CD8-positive, alpha-beta T cell (primary cell): ENCODE measurements at regions of chr10 and their contacts with region 1.

Region 1: DNA sequence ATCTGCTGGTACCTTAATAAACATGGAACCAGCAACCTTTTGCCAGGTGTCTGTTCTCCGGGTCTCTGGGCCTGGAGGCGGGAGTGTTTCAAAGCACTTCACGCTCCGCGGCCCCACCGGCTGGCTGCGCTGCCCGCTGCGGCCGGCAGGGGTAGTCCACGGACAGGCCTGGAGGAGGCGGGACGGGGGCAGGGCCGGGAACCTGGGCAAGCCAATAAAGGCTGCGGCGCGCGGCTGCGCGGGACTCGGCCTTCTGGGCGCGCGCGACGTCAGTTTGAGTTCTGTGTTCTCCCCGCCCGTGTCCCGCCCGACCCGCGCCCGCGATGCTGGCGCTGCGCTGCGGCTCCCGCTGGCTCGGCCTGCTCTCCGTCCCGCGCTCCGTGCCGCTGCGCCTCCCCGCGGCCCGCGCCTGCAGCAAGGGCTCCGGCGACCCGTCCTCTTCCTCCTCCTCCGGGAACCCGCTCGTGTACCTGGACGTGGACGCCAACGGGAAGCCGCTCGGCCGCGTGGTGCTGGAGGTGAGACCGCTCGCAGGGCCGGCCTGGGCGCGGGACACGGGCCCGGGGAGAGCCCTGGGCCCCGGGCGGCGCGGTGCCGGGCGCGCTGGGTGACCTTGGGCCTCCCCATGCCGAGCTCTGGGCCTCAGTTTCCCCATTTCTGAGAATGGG is at the start of gene PPIF:
- DNase-seq: peak; percentile 76 to 97 (median 92)
- ATAC-seq: peak; percentile 90
- H3K4me3 ChIP-seq: peak within 1 kb of the TSS; percentile 76 to 93
- H3K4me3 Mint-ChIP-seq: peak within 1 kb of the TSS; percentile 78
- H3K27ac ChIP-seq: peak within 1 kb of the TSS; percentile 60 to 74
- H3K27ac Mint-ChIP-seq: peak within 1 kb of the TSS; percentile 87
- H3K4me1 ChIP-seq: peaks cover 27% of the 10 kb centered on the region
- H3K4me1 Mint-ChIP-seq: peaks cover 22% of the 10 kb centered on the region
- H3K27me3 ChIP-seq: no peaks in the 10 kb centered on the region
- H3K27me3 Mint-ChIP-seq: no peaks in the 10 kb centered on the region
- CTCF ChIP-seq: peak; percentile 86
- total RNA-seq, gene PPIF: 33.7 to 36.4 TPM

Region 2: GRCh38 chr10:78312197-78313047 is 1034.9 kb before region 1 on chr10:
- CTCF ChIA-PET with region 1: no interaction called
- POLR2A ChIA-PET with region 1: no interaction called
- intact Hi-C with region 1: loop called in 1 of 2 experiments (anchors 5 kb)
- DNase-seq: peak in 1 of 9 experiments; percentile 15
- ATAC-seq: no peak
- H3K4me3 ChIP-seq: no peak overlapping the region
- H3K4me3 Mint-ChIP-seq: no peak overlapping the region
- H3K27ac ChIP-seq: no peak overlapping the region
- H3K27ac Mint-ChIP-seq: no peak overlapping the region
- H3K4me1 ChIP-seq: no peaks in the 10 kb centered on the region
- H3K4me1 Mint-ChIP-seq: no peaks in the 10 kb centered on the region
- H3K27me3 ChIP-seq: no peaks in the 10 kb centered on the region
- H3K27me3 Mint-ChIP-seq: no peaks in the 10 kb centered on the region
- CTCF ChIP-seq: no peak

Region 3: DNA sequence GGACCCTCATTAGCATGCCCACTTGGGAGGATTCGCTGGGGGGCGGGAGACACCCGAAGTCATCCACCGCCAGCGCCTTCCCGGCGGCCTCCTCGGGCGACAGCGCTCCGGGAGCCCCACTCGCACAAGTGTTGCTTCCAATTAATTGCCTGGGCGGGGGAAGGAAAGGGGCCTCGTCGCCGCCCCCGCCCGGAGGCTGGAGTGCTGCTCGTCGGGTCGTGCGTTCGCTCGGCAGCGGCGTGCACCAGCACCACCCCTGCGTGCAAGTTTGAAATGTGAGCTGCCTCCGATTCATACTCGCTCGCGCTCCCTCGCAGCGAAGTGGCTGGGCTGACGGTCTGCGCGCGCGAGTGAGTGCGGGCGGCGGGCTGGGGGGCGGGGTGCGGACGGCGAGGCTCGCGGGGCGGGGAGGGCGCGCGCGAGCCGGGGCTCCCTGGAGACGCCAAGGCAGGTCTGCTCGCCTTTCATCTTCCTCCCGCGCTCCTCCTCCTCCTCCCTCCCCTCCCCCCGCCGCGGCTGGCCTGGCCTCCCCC is 104.7 kb before region 1 on chr10:
- CTCF ChIA-PET with region 1: no interaction called
- POLR2A ChIA-PET with region 1: no interaction called
- intact Hi-C with region 1: loop called (anchors 5 kb)
- DNase-seq: peak in 8 of 9 experiments; percentile 13 to 80 (median 51)
- ATAC-seq: peak; percentile 51
- H3K4me3 ChIP-seq: peak overlapping the region; percentile 49 to 61
- H3K4me3 Mint-ChIP-seq: peak overlapping the region; percentile 76
- H3K27ac ChIP-seq: peak overlapping the region in 1 of 2 experiments; percentile 39
- H3K27ac Mint-ChIP-seq: no peak overlapping the region
- H3K4me1 ChIP-seq: peaks cover 33% of the 10 kb centered on the region
- H3K4me1 Mint-ChIP-seq: peaks cover 42% of the 10 kb centered on the region
- H3K27me3 ChIP-seq: no peaks in the 10 kb centered on the region
- H3K27me3 Mint-ChIP-seq: no peaks in the 10 kb centered on the region
- CTCF ChIP-seq: no peak

Region 4: GRCh38 chr10:79292891-79293746 is 54.2 kb before region 1 on chr10:
- CTCF ChIA-PET with region 1: interaction called, 6 read pairs
- POLR2A ChIA-PET with region 1: no interaction called
- intact Hi-C with region 1: loop called in 1 of 2 experiments (anchors 2 kb)
- DNase-seq: peak in 5 of 9 experiments; percentile 26 to 60 (median 47)
- ATAC-seq: peak; percentile 68
- H3K4me3 ChIP-seq: no peak overlapping the region
- H3K4me3 Mint-ChIP-seq: no peak overlapping the region
- H3K27ac ChIP-seq: no peak overlapping the region
- H3K27ac Mint-ChIP-seq: no peak overlapping the region
- H3K4me1 ChIP-seq: no peaks in the 10 kb centered on the region
- H3K4me1 Mint-ChIP-seq: no peaks in the 10 kb centered on the region
- H3K27me3 ChIP-seq: no peaks in the 10 kb centered on the region
- H3K27me3 Mint-ChIP-seq: no peaks in the 10 kb centered on the region
- CTCF ChIP-seq: peak; percentile 33

Region 5: GRCh38 chr10:79322616-79323543 is 24.5 kb before region 1 on chr10:
- CTCF ChIA-PET with region 1: interaction called, 39 read pairs
- POLR2A ChIA-PET with region 1: interaction called, 20 read pairs
- intact Hi-C with region 1: loop called (anchors 1 kb)
- DNase-seq: peak; percentile 60 to 93 (median 89)
- ATAC-seq: peak; percentile 89
- H3K4me3 ChIP-seq: peak overlapping the region; percentile 4 to 16
- H3K4me3 Mint-ChIP-seq: peak overlapping the region; percentile 77
- H3K27ac ChIP-seq: peak overlapping the region; percentile 51 to 70
- H3K27ac Mint-ChIP-seq: peak overlapping the region; percentile 95
- H3K4me1 ChIP-seq: peaks cover 68% of the 10 kb centered on the region
- H3K4me1 Mint-ChIP-seq: peaks cover 65% of the 10 kb centered on the region
- H3K27me3 ChIP-seq: no peaks in the 10 kb centered on the region
- H3K27me3 Mint-ChIP-seq: no peaks in the 10 kb centered on the region
- CTCF ChIP-seq: no peak

Region 6: DNA sequence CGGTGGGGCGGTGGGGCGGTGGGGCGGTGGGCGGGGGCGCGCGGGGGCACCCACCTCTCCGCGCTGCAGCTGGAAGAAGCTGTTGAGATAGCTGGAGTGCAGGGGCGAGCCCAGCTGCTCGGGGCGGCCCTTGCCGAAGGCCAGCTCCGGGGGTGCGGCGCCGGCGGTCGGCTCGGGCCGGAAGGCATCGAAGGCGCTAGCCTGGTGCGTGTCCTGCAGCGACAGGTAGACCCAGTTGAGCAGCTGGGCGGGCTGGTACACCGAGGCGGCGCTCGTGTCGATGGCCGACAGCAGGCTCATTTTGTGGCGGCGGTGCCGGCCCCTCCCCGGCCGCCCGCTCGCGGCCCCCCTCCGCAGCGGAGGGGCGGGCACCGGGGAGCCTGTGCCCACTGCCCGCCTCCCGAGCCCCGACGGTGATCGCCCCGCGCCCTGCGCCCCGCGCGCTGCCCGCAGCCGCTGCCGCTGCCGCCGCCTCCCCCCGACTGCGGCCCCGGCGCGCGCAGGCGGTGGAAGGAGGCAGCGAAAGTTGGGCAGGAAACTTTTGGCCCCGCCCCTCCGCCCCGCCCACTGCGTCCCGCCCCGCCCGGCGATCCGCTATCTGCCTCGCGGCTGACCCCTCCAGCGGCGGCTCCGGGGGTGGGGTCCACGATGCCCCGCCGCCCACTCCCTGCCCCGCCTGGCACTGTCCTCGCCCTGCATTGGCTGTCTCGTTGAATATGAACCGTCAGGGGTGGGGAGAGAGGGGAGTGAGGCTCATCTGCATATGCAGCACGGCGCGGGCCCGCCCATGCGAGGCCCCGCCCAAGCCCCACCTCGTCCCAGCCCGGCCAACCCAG is 98.0 kb after region 1 on chr10 and contains the start of gene ZCCHC24:
- CTCF ChIA-PET with region 1: no interaction called
- POLR2A ChIA-PET with region 1: no interaction called
- intact Hi-C with region 1: loop called (anchors 1 to 2 kb)
- DNase-seq: peak; percentile 90 to 98 (median 94)
- ATAC-seq: peak; percentile 93
- H3K4me3 ChIP-seq: peak within 1 kb of the TSS; percentile 55 to 59
- H3K4me3 Mint-ChIP-seq: peak within 1 kb of the TSS; percentile 85
- H3K27ac ChIP-seq: peak within 1 kb of the TSS; percentile 14 to 22
- H3K27ac Mint-ChIP-seq: peak within 1 kb of the TSS; percentile 67
- H3K4me1 ChIP-seq: peaks cover 24% of the 10 kb centered on the region
- H3K4me1 Mint-ChIP-seq: peaks cover 24% of the 10 kb centered on the region
- H3K27me3 ChIP-seq: no peaks in the 10 kb centered on the region
- H3K27me3 Mint-ChIP-seq: no peaks in the 10 kb centered on the region
- CTCF ChIP-seq: no peak
- total RNA-seq, gene ZCCHC24: 1.1 to 1.9 TPM